Caco-2 (cell line): ENCODE measurements at regions of chr2 and their contacts with region 1.

Region 1: GRCh38 chr2:57759822-57760300 is 286.7 kb upstream of the VRK2 start:
- DNase-seq: peak; percentile 83 to 93
- H3K4me3 ChIP-seq: peak overlapping the region; percentile 20
- H3K4me3 Mint-ChIP-seq: peak overlapping the region; percentile 68
- H3K27ac Mint-ChIP-seq: no peak overlapping the region
- H3K4me1 ChIP-seq: no peaks in the 10 kb centered on the region
- H3K4me1 Mint-ChIP-seq: peaks cover 11% of the 10 kb centered on the region
- H3K27me3 ChIP-seq: no peaks in the 10 kb centered on the region
- H3K27me3 Mint-ChIP-seq: peaks cover 6% of the 10 kb centered on the region
- CTCF ChIP-seq: peak; percentile 94 to 98

Region 2: GRCh38 chr2:57711991-57712390 is 47.9 kb before region 1 on chr2:
- CTCF ChIA-PET with region 1: no interaction called
- POLR2A ChIA-PET with region 1: no interaction called
- intact Hi-C with region 1: no loop called
- DNase-seq: no peak
- H3K4me3 ChIP-seq: no peak overlapping the region
- H3K4me3 Mint-ChIP-seq: no peak overlapping the region
- H3K27ac Mint-ChIP-seq: no peak overlapping the region
- H3K4me1 ChIP-seq: no peaks in the 10 kb centered on the region
- H3K4me1 Mint-ChIP-seq: no peaks in the 10 kb centered on the region
- H3K27me3 ChIP-seq: no peaks in the 10 kb centered on the region
- H3K27me3 Mint-ChIP-seq: peaks cover 10% of the 10 kb centered on the region
- CTCF ChIP-seq: no peak

Region 3: DNA sequence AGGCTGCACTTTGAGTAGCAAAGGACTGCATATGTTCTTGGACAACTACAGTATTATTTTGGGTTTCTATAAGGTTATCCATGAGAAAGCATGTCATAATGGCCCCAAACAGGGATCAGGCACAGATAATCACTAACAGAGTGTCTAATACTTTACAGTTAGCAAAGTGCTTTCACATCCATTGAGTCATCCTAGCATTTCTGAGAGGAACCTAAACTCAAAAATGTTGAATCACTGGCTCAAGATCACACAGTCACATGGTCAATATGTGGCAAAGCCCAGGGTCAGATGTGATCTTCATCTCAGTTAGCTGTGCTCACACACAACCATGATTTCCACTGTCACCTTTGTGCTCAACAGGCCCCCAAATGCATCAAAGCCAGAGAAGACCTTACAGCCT is 130.6 kb after region 1 on chr2:
- CTCF ChIA-PET with region 1: no interaction called
- POLR2A ChIA-PET with region 1: no interaction called
- intact Hi-C with region 1: loop called (anchors 5 kb)
- DNase-seq: no peak
- H3K4me3 ChIP-seq: no peak overlapping the region
- H3K4me3 Mint-ChIP-seq: no peak overlapping the region
- H3K27ac Mint-ChIP-seq: no peak overlapping the region
- H3K4me1 ChIP-seq: peaks cover 21% of the 10 kb centered on the region
- H3K4me1 Mint-ChIP-seq: peaks cover 28% of the 10 kb centered on the region
- H3K27me3 ChIP-seq: no peaks in the 10 kb centered on the region
- H3K27me3 Mint-ChIP-seq: no peaks in the 10 kb centered on the region
- CTCF ChIP-seq: no peak

Region 4: DNA sequence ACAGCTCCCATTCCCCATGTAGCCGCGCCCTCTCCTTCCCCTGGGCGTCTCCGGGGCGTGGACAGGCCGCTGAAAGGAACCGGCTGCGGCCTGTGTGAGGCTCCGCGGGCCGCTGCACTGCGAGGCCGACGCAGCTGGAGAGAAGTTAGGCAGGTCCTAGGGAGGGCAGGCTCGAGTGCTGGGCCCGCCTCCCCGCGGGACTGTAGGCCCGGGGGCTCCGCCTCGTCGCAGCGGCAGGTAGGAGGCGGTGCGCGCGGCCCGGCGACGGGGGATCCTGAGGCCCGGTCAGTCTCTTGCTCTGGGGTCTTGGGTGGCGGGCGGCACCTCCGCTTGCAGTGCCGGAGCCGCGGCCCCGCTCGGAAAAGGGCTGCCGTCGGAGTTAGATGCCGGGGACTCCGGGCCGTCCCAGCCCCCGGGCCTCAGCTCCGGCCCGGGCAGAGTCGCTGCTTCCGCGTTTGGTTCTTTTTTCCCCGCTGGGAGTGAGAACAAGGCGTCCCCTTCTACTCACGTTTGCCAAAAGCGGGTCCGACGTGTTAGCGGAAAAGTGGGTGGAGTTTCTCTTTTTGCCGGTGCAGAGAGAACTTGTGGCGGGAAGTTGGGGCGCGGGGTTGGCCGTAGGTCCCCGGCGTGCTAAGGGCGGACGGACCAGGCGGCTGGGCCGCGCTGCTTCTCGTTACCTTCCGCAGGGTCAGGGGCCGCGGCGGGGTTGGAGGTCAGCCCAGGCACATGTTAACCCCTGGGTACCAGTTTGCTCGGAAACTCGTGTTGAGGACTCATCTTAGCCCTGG is 286.9 kb after region 1 on chr2 and contains the start of gene VRK2:
- CTCF ChIA-PET with region 1: no interaction called
- POLR2A ChIA-PET with region 1: no interaction called
- intact Hi-C with region 1: loop called (anchors 5 kb)
- DNase-seq: peak; percentile 95 to 96
- H3K4me3 ChIP-seq: peak within 1 kb of the TSS; percentile 66
- H3K4me3 Mint-ChIP-seq: peak within 1 kb of the TSS; percentile 86
- H3K27ac Mint-ChIP-seq: peak within 1 kb of the TSS; percentile 65
- H3K4me1 ChIP-seq: peaks cover 30% of the 10 kb centered on the region
- H3K4me1 Mint-ChIP-seq: peaks cover 26% of the 10 kb centered on the region
- H3K27me3 ChIP-seq: no peaks in the 10 kb centered on the region
- H3K27me3 Mint-ChIP-seq: no peaks in the 10 kb centered on the region
- CTCF ChIP-seq: peak in 1 of 2 experiments; percentile 16
- total RNA-seq, gene VRK2: 33.1 and 35.4 TPM in 2 replicates

Region 5: DNA sequence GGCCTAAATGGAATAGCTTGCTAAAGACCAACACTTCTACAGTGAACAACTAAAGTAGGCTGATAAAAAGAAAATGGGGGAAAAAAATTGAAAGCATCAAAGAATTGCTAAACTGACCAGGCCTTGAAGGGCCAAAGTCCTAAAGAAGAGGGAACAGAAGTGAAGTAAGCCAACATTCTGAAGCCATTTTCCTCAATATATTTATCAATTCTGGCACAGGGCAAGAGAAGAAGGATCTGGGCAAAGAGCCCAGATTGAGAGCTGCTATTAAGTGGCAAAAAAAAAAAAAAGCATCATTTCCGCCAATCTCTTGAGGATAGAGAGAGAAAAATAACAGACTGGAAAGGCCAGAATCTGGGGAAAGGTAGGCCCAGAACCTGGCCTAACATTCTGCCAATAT is 455.6 kb after region 1 on chr2:
- CTCF ChIA-PET with region 1: no interaction called
- POLR2A ChIA-PET with region 1: no interaction called
- intact Hi-C with region 1: loop called (anchors 5 kb)
- DNase-seq: no peak
- H3K4me3 ChIP-seq: no peak overlapping the region
- H3K4me3 Mint-ChIP-seq: no peak overlapping the region
- H3K27ac Mint-ChIP-seq: no peak overlapping the region
- H3K4me1 ChIP-seq: no peaks in the 10 kb centered on the region
- H3K4me1 Mint-ChIP-seq: peaks cover 6% of the 10 kb centered on the region
- H3K27me3 ChIP-seq: no peaks in the 10 kb centered on the region
- H3K27me3 Mint-ChIP-seq: no peaks in the 10 kb centered on the region
- CTCF ChIP-seq: no peak

Region 6: DNA sequence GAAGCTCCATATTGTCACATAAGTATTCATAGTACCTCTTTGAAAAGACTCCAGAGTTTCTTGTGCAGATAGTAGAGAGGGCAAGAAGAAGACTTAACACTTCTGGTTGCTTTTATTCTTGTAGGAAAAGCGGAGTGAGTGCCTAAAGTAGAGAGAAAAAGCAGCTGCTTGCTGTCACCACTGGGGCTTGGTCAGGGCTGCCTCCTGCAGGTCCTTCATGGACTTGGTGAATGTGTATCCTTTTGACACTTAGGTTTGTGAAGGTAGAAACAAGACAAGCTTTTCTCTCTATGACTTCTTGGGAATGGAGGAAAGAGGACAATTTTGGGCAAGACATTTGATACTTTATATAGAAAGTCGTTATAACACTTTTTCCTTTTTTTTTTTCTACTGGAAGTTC is 794.1 kb after region 1 on chr2:
- CTCF ChIA-PET with region 1: no interaction called
- POLR2A ChIA-PET with region 1: no interaction called
- intact Hi-C with region 1: loop called (anchors 5 kb)
- DNase-seq: no peak
- H3K4me3 ChIP-seq: no peak overlapping the region
- H3K4me3 Mint-ChIP-seq: no peak overlapping the region
- H3K27ac Mint-ChIP-seq: no peak overlapping the region
- H3K4me1 ChIP-seq: no peaks in the 10 kb centered on the region
- H3K4me1 Mint-ChIP-seq: no peaks in the 10 kb centered on the region
- H3K27me3 ChIP-seq: no peaks in the 10 kb centered on the region
- H3K27me3 Mint-ChIP-seq: peaks cover 11% of the 10 kb centered on the region
- CTCF ChIP-seq: peak; percentile 22 to 31